ENCODE measurements at regions of chr17 and their contacts with region 1.

Region 1: GRCh38 chr17:81566461-81567126 is 14.4 kb upstream of the FAAP100 start:
- DNase-seq: peak; percentile 62 to 84
- ATAC-seq: peak; percentile 58 to 71 (median 62)
- H3K4me3 ChIP-seq: no peak overlapping the region
- H3K27ac ChIP-seq: peak overlapping the region; percentile 66
- H3K4me1 ChIP-seq: peaks cover 20% of the 10 kb centered on the region
- H3K27me3 ChIP-seq: no peaks in the 10 kb centered on the region
- CTCF ChIP-seq: no peak

Region 2: GRCh38 chr17:81601525-81602120 is 35.0 kb after region 1 on chr17:
- intact Hi-C with region 1: loop called in 1 of 2 experiments (anchors 5 kb)
- DNase-seq: no peak
- ATAC-seq: peak; percentile 57 to 78 (median 70)
- H3K4me3 ChIP-seq: no peak overlapping the region
- H3K27ac ChIP-seq: no peak overlapping the region
- H3K4me1 ChIP-seq: peaks cover 3% of the 10 kb centered on the region
- H3K27me3 ChIP-seq: no peaks in the 10 kb centered on the region
- CTCF ChIP-seq: peak; percentile 62

Region 3: DNA sequence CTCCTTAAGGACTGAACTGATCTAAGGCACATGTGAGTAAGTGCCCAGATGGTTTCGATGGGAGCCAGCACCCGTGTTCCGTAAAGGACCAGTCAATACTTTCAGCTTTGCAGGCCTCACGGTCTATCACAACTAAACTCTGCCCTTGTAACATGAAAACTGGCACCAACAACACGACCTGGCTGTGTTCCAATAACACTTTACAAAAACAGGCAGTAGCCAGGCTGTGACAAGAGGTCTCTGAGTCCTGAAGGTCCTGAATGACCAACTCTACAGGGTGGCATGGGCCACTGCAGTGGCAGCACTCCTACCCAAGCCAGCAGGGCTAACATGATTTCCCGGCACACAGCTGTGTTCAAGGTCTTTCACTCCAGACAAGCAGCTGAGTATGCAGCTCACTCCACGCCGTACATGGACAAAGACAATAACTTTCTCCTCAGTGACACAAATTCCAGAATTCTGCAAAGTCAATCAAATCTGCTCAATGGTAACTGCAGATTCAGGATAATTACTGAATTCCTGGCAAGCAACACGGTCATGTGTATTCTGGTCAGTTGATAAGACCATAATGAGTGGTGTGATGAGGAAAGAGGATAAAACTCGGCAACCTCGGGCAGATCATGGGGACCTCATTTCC is 55.0 kb after region 1 on chr17:
- intact Hi-C with region 1: loop called in 1 of 2 experiments (anchors 10 kb)
- DNase-seq: no peak
- ATAC-seq: peak; percentile 44 to 56 (median 52)
- H3K4me3 ChIP-seq: no peak overlapping the region
- H3K27ac ChIP-seq: no peak overlapping the region
- H3K4me1 ChIP-seq: peaks cover 5% of the 10 kb centered on the region
- H3K27me3 ChIP-seq: no peaks in the 10 kb centered on the region
- CTCF ChIP-seq: no peak